ENCODE measurements at regions of chr15 and their contacts with region 1.

Region 1: GRCh38 chr15:99565299-99566156 is at the start of gene MEF2A:
- DNase-seq: peak; percentile 97
- ATAC-seq: peak; percentile 81
- total RNA-seq, gene MEF2A: 137 TPM

Region 2: DNA sequence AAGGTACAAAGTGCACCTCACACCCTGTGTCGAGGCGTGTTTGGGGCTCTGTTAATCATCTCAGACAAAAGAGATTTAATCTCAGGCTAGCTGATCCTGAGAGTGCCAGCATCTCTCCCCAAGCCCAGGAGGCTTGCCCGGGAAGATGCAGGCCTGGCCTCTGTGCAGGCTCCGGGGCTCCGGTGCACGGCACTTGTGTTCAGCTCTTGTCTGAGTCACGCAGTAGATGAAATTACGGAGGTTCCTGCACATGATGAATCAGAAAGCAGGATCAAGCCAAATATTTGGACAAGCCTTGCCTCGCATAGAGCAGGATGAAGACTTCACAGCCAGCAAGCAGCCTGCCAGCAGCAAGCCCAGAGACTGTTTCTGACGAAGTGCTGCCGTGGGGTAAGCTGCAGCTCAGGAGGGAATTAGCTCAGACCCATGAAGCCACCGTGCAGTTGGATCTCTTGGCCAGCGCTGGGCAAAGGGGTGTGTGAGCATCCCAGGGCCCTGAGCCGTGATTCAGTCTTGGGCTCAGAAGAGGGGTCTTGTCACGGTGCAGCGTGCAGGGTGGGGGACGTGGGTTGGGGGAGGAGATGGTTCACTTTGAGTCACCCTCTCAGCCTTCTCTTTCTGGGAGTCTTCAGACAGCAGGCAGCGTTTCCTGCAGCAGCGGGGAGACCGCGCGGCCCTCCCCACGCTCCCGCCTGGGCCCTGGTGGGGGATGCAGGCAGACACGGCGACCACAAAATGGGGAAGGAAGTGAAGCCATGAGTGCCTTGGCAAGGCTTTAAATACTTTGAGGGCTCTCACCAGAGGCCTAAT is 88.9 kb before region 1 on chr15:
- intact Hi-C with region 1: loop called (anchors 10 kb)
- DNase-seq: peak; percentile 71
- ATAC-seq: peak; percentile 24

Region 3: GRCh38 chr15:99507504-99508310 is 57.8 kb before region 1 on chr15:
- intact Hi-C with region 1: loop called (anchors 5 kb)
- DNase-seq: peak; percentile 80
- ATAC-seq: peak; percentile 87

Region 4: DNA sequence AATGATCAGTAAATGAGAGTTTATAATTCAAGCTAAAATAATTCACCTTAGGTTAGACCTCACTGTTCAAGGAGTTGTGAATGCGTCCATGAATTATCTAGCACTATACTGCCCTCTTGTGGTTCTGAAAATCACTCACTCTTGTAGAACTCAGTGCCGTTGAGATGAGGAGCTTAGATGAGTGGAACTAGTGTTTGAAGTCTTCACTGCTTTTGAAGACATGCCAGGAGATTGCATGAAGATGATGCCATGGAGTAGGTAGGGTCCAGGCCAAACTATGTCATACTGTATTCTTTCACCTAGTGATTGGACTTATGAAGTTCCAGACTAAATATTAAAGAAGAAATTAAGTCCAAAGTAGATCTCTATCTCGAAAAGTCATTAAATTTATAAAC is 138.9 kb after region 1 on chr15:
- intact Hi-C with region 1: loop called (anchors 5 kb)
- DNase-seq: no peak
- ATAC-seq: peak; percentile 85